ENCODE measurements at regions of chr3 and their contacts with region 1.

Region 1: DNA sequence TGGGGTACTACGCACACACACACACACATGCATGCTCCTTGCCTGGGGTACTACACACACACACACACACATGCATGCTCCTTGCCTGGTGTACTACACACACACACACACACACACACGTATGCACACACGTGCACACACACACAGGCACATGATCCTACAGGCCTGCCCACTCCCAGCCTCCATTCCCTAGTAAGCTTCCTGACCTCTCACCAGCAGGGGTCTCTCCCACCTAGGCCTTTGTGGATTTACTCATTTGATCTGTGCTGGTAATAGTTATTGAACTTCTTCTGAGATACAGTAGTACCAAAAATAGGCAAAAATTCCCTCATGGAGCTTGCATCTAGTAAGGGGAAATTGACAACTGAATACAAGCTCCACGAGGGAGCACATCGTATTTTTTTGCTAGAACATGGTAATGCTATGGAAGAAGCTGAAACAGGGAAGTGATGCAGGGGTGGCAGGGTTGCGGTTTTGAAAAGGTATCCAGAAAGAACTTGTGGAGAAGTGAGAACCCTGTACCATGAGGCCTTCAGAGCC is 19.1 kb downstream of the TTC21A start:
- DNase-seq: peak in 4 of 9 donors; percentile 39 to 59 (median 50)
- ATAC-seq: peak; percentile 60
- H3K4me3 ChIP-seq: no peak overlapping the region
- H3K4me3 Mint-ChIP-seq: no peak overlapping the region
- H3K27ac ChIP-seq: no peak overlapping the region
- H3K27ac Mint-ChIP-seq: peak overlapping the region in 6 of 9 donors; percentile 22 to 87 (median 54)
- H3K4me1 ChIP-seq: peaks cover 12 to 14% of the 10 kb centered on the region in 2 donors
- H3K4me1 Mint-ChIP-seq: peaks cover 15 to 34% (median 24%) of the 10 kb centered on the region in 7 donors
- H3K27me3 ChIP-seq: no peaks in the 10 kb centered on the region
- H3K27me3 Mint-ChIP-seq: peaks cover 0 to 10% (median 0%) of the 10 kb centered on the region in 5 donors

Region 2: DNA sequence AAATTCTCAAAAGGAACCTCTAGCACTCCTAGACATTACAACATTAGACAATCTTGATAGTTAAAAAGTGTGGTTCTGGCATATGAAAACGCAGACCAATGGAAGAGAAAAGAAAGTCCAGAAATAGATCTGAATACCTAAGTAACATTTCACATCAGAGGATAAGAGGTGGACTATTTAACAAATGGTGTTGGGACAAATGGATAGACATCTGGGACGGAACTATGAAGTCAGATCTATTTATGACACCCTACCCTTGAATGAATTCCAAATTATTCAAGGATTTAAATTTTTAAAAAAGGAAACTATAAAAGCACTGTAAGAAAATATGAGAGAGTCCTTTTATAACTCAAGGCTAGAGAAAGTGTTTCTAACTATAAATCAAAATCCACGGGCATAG is 186.2 kb before region 1 on chr3:
- CTCF ChIA-PET with region 1: no interaction called
- POLR2A ChIA-PET with region 1: no interaction called
- intact Hi-C with region 1: no loop called
- DNase-seq: no peak
- ATAC-seq: no peak
- H3K4me3 ChIP-seq: no peak overlapping the region
- H3K4me3 Mint-ChIP-seq: no peak overlapping the region
- H3K27ac ChIP-seq: no peak overlapping the region
- H3K27ac Mint-ChIP-seq: no peak overlapping the region
- H3K4me1 ChIP-seq: no peaks in the 10 kb centered on the region
- H3K4me1 Mint-ChIP-seq: no peaks in the 10 kb centered on the region
- H3K27me3 ChIP-seq: no peaks in the 10 kb centered on the region
- H3K27me3 Mint-ChIP-seq: peaks cover 0 to 6% (median 3%) of the 10 kb centered on the region in 5 donors

Region 3: DNA sequence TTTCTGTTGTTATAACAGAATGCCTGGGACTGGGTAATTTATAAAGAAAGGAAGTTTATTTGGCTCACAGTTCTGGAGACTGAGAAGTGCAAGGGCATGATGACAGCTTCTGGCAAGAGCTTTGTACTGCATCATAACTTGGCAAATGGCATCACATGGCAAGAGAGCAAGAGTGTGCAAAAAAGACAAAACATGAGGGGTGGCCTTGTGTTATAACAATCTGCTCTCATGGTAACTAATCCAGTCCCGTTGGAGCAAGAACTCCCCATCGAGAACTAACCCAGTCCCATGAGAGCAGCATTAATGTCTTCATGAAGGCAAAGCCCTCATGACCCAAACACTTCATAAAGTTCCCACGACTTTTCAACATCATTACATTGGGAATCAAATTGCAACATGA is 98.1 kb before region 1 on chr3:
- CTCF ChIA-PET with region 1: no interaction called
- POLR2A ChIA-PET with region 1: no interaction called
- intact Hi-C with region 1: no loop called
- DNase-seq: no peak
- ATAC-seq: no peak
- H3K4me3 ChIP-seq: no peak overlapping the region
- H3K4me3 Mint-ChIP-seq: no peak overlapping the region
- H3K27ac ChIP-seq: no peak overlapping the region
- H3K27ac Mint-ChIP-seq: no peak overlapping the region
- H3K4me1 ChIP-seq: no peaks in the 10 kb centered on the region
- H3K4me1 Mint-ChIP-seq: peaks cover 0 to 2% (median 0%) of the 10 kb centered on the region in 7 donors
- H3K27me3 ChIP-seq: no peaks in the 10 kb centered on the region
- H3K27me3 Mint-ChIP-seq: peaks cover 0 to 22% (median 8%) of the 10 kb centered on the region in 5 donors

Region 4: GRCh38 chr3:39107388-39108199 is 19.0 kb before region 1 on chr3 and contains the starts of genes GORASP1 and TTC21A:
- CTCF ChIA-PET with region 1: interaction called, 3 read pairs
- POLR2A ChIA-PET with region 1: interaction called, 3 read pairs
- intact Hi-C with region 1: loop called in 1 of 2 experiments (anchors 2 kb)
- DNase-seq: peak; percentile 33 to 79 (median 53)
- ATAC-seq: peak; percentile 74
- H3K4me3 ChIP-seq: peak within 1 kb of the TSS; percentile 95
- H3K4me3 Mint-ChIP-seq: peak within 1 kb of the TSS; percentile 88 to 100 (median 96)
- H3K27ac ChIP-seq: peak within 1 kb of the TSS; percentile 78
- H3K27ac Mint-ChIP-seq: peak within 1 kb of the TSS; percentile 84 to 96 (median 92)
- H3K4me1 ChIP-seq: peaks cover 18 to 22% of the 10 kb centered on the region in 2 donors
- H3K4me1 Mint-ChIP-seq: peaks cover 45 to 62% (median 52%) of the 10 kb centered on the region in 7 donors
- H3K27me3 ChIP-seq: no peaks in the 10 kb centered on the region
- H3K27me3 Mint-ChIP-seq: peaks cover 0 to 5% (median 0%) of the 10 kb centered on the region in 5 donors
- total RNA-seq, gene GORASP1: 28.2 to 58.5 (median 44.6) TPM
- total RNA-seq, gene TTC21A: 2.8 to 9.7 (median 5.3) TPM

Region 5: GRCh38 chr3:39166134-39166731 is 39.6 kb after region 1 on chr3:
- CTCF ChIA-PET with region 1: interaction called, 3 read pairs
- POLR2A ChIA-PET with region 1: no interaction called
- intact Hi-C with region 1: loop called in 1 of 2 experiments (anchors 1 kb)
- DNase-seq: no peak
- ATAC-seq: peak; percentile 36
- H3K4me3 ChIP-seq: no peak overlapping the region
- H3K4me3 Mint-ChIP-seq: no peak overlapping the region
- H3K27ac ChIP-seq: no peak overlapping the region
- H3K27ac Mint-ChIP-seq: no peak overlapping the region
- H3K4me1 ChIP-seq: no peaks in the 10 kb centered on the region
- H3K4me1 Mint-ChIP-seq: peaks cover 0 to 23% (median 0%) of the 10 kb centered on the region in 7 donors
- H3K27me3 ChIP-seq: no peaks in the 10 kb centered on the region
- H3K27me3 Mint-ChIP-seq: no peaks in the 10 kb centered on the region

Region 6: GRCh38 chr3:39189959-39190269 is 63.3 kb after region 1 on chr3:
- CTCF ChIA-PET with region 1: interaction called, 8 read pairs
- POLR2A ChIA-PET with region 1: no interaction called
- intact Hi-C with region 1: loop called in 1 of 2 experiments (anchors 1 kb)
- DNase-seq: peak; percentile 26 to 63 (median 55)
- ATAC-seq: peak; percentile 80
- H3K4me3 ChIP-seq: no peak overlapping the region
- H3K4me3 Mint-ChIP-seq: no peak overlapping the region
- H3K27ac ChIP-seq: no peak overlapping the region
- H3K27ac Mint-ChIP-seq: peak overlapping the region in 6 of 9 donors; percentile 1 to 79 (median 29)
- H3K4me1 ChIP-seq: peaks cover 0 to 5% of the 10 kb centered on the region in 2 donors
- H3K4me1 Mint-ChIP-seq: peaks cover 4 to 18% (median 6%) of the 10 kb centered on the region in 7 donors
- H3K27me3 ChIP-seq: no peaks in the 10 kb centered on the region
- H3K27me3 Mint-ChIP-seq: no peaks in the 10 kb centered on the region

Region 7: GRCh38 chr3:39378088-39378487 is 251.5 kb after region 1 on chr3:
- CTCF ChIA-PET with region 1: interaction called, 3 read pairs
- POLR2A ChIA-PET with region 1: no interaction called
- intact Hi-C with region 1: loop called in 1 of 2 experiments (anchors 1 kb)
- DNase-seq: peak in 8 of 9 donors; percentile 32 to 68 (median 62)
- ATAC-seq: peak; percentile 86
- H3K4me3 ChIP-seq: no peak overlapping the region
- H3K4me3 Mint-ChIP-seq: no peak overlapping the region
- H3K27ac ChIP-seq: no peak overlapping the region
- H3K27ac Mint-ChIP-seq: no peak overlapping the region
- H3K4me1 ChIP-seq: peaks cover 6% of the 10 kb centered on the region in 2 donors
- H3K4me1 Mint-ChIP-seq: peaks cover 0 to 20% (median 13%) of the 10 kb centered on the region in 7 donors
- H3K27me3 ChIP-seq: no peaks in the 10 kb centered on the region
- H3K27me3 Mint-ChIP-seq: peaks cover 0 to 3% (median 0%) of the 10 kb centered on the region in 5 donors